HepG2 (cell line): ENCODE measurements at regions of chr2 and their contacts with region 1.

Region 1: GRCh38 chr2:231557571-231558237 is 27.5 kb upstream of the NMUR1 start:
- DNase-seq: peak; percentile 58
- ATAC-seq: peak; percentile 69
- H3K4me3 ChIP-seq: no peak overlapping the region
- H3K27ac ChIP-seq: no peak overlapping the region
- H3K4me1 ChIP-seq: 0 out of 2 replicates have a peak, but pooled peaks cover 11% of the 10 kb centered on the region
- H3K27me3 ChIP-seq: no peaks in the 10 kb centered on the region; a peak in 1 of 5 replicates
- CTCF ChIP-seq: peak; percentile 89
- EP300 ChIP-seq: no peak
- POLR2A ChIP-seq: no peak
- RAD21 ChIP-seq: peak; percentile 68

Region 2: DNA sequence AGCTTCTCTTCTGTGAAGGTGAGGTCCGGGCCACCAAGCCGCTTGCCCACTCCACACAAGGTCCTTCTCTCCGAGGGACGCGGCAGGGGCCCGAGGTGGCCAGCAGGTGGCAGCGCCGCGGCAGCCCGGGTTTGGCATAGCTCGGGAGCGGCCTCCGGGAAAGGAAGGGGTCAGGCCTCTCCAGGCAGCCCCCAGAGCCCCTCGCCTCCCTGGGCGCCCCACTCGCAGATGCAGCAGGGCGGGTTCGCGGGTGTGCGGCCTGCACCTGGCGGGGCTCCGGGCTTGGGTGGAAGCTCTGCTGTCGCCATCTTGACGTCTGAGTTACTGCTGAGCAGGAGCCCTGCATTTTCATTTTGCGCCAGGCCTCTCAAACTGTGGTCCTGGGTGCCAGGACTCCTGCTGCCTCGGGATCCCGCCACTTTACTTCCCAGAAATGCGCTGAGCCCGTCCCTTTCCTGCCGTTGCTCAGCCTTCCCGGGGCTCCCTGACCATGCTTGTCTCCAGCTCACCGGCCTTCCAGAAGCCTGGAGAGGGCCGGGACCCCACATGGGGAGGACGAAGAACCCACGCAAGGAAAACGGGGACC is 74.8 kb before region 1 on chr2:
- CTCF ChIA-PET with region 1: interaction called, 10 read pairs
- POLR2A ChIA-PET with region 1: no interaction called
- in situ Hi-C with region 1: loop called (anchors 5 kb)
- intact Hi-C with region 1: loop called (anchors 2 kb)
- DNase-seq: peak; percentile 65
- ATAC-seq: peak; percentile 98
- H3K4me3 ChIP-seq: peak overlapping the region; percentile 34 to 71 (median 70); a peak in 5 of 6 replicates
- H3K27ac ChIP-seq: no peak overlapping the region
- H3K4me1 ChIP-seq: peaks cover 7% of the 10 kb centered on the region
- H3K27me3 ChIP-seq: peaks cover 3 to 28% of the 10 kb centered on the region in 2 experiments; a peak in 2 of 5 replicates
- CTCF ChIP-seq: peak; percentile 97
- EP300 ChIP-seq: no peak
- POLR2A ChIP-seq: no peak
- RAD21 ChIP-seq: peak; percentile 82

Region 3: GRCh38 chr2:231530091-231531011 is 27.4 kb before region 1 on chr2 and contains the start of gene NMUR1:
- CTCF ChIA-PET with region 1: interaction called, 18 read pairs
- POLR2A ChIA-PET with region 1: no interaction called
- in situ Hi-C with region 1: no loop called
- intact Hi-C with region 1: loop called (anchors 1 kb)
- DNase-seq: no peak
- ATAC-seq: peak; percentile 79
- H3K4me3 ChIP-seq: peak within 1 kb of the TSS in 1 of 3 experiments; percentile 45; a peak in 1 of 6 replicates
- H3K27ac ChIP-seq: no peak within 1 kb of the TSS
- H3K4me1 ChIP-seq: no peaks in the 10 kb centered on the region
- H3K27me3 ChIP-seq: peaks cover 8 to 47% of the 10 kb centered on the region in 2 experiments; a peak in 4 of 5 replicates
- CTCF ChIP-seq: peak; percentile 74
- EP300 ChIP-seq: no peak
- POLR2A ChIP-seq: no peak
- RAD21 ChIP-seq: peak; percentile 73
- total RNA-seq, gene NMUR1: not detected in 2 replicates

Region 4: DNA sequence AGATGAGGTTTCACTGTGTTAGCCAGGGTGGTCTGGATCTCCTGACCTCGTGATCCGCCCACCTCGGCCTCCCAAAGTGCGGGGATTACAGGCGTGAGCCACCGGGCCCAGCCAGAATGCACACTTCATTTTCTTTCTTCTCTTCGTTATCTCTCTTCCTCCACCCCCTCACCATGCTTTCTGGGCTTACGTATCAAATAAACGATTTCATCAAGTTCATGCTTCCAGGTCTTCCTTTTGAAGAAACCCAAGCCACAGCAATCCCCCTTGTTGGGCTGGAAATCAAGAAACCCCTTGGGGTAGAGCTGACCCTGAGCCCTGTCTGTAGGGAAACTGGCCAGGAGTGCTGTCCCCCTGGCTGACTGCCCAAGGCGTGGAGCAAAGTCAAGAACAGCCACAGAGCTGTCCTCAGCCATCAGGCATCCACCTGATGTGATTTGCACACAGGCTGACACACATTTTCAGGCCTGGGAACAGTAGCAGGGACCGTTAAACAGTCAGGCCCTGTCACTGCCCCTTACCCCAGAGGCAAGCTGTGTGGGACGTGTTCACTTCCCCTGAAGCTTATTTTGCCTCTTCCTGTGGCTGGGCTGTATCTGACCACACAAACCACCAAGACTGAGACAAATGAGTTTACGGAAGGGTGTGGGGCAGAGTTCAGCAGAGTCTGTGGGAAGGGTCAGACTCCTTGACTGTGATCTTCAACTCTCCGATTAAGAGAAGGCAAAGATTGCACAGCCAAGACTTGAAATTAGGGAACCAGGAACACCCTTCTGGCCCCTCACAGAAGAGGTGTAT is 12.4 kb before region 1 on chr2:
- CTCF ChIA-PET with region 1: no interaction called
- POLR2A ChIA-PET with region 1: no interaction called
- in situ Hi-C with region 1: no loop called
- intact Hi-C with region 1: no loop called
- DNase-seq: no peak
- ATAC-seq: peak; percentile 42; the same call in 2 of the 3 replicates
- H3K4me3 ChIP-seq: no peak overlapping the region
- H3K27ac ChIP-seq: no peak overlapping the region
- H3K4me1 ChIP-seq: no peaks in the 10 kb centered on the region
- H3K27me3 ChIP-seq: peaks cover 0 to 8% of the 10 kb centered on the region in 2 experiments; a peak in 1 of 5 replicates
- CTCF ChIP-seq: no peak
- EP300 ChIP-seq: no peak
- POLR2A ChIP-seq: no peak
- RAD21 ChIP-seq: no peak